Dendritic cell treated with granulocyte-macrophage colony-stimulating factor and Interleukin-4, amounts not matched to agents 40 ng/mL and 50 ng/mL, for 4 days (primary cell): ENCODE measurements at regions of chr17 and their contacts with region 1.

Region 1: GRCh38 chr17:49637050-49637449 is 40.8 kb downstream of the SPOP start:
- H3K4me3 Mint-ChIP-seq: no peak overlapping the region
- H3K27ac Mint-ChIP-seq: peak overlapping the region; percentile 45
- H3K4me1 Mint-ChIP-seq: peaks cover 48% of the 10 kb centered on the region
- H3K27me3 Mint-ChIP-seq: no peaks in the 10 kb centered on the region

Region 2: GRCh38 chr17:49575579-49576087 is 61.4 kb before region 1 on chr17 and contains the start of gene NXPH3:
- intact Hi-C with region 1: loop called (anchors 10 kb)
- H3K4me3 Mint-ChIP-seq: peak within 1 kb of the TSS; percentile 78
- H3K27ac Mint-ChIP-seq: peak within 1 kb of the TSS; percentile 68
- H3K4me1 Mint-ChIP-seq: peaks cover 48% of the 10 kb centered on the region
- H3K27me3 Mint-ChIP-seq: peaks cover 89% of the 10 kb centered on the region

Region 3: DNA sequence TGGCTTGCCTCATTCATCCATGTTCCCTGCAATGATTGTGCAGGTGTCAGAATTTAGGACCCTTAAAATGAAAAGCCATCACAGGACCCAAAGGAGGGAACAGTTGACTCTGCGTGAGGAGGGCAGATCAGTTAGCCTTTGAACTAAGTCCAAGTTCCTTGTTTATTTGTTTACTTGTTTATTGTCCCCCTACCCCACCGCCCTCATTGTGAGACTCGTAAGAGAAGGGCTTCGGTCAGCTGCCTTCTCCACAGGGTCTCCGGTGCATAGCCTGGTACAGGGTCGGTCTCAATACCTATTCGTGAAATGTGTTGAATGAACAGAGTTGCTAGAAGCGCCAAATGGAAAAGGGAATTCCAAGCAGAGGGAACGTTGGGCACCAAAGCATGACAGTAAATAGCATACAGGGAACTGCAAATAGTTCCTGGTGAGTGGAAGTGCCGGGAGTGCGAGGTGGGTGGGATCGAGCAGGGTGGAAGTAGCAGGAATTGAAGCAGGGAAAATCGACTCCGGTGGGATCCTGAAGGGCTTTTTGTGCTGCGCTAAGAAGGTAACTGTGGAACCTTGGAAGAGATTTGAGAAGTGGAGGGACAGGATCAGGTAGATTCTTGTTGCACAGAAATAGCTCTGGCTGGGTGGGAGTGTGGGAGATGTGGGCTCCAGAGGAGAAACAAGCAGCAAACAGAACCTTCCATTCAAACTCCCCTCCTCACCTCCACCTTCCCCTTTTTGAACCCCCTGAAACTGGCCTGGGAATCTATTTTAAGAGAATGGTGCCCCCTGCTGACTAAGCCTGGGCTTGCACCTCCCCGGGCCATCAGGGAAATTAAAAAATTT is 58.0 kb after region 1 on chr17:
- intact Hi-C with region 1: loop called (anchors 10 kb)
- H3K4me3 Mint-ChIP-seq: peak overlapping the region; percentile 56
- H3K27ac Mint-ChIP-seq: peak overlapping the region; percentile 75
- H3K4me1 Mint-ChIP-seq: peaks cover 66% of the 10 kb centered on the region
- H3K27me3 Mint-ChIP-seq: peaks cover 5% of the 10 kb centered on the region